ENCODE measurements at regions of chr17 and their contacts with region 1.

Region 1: DNA sequence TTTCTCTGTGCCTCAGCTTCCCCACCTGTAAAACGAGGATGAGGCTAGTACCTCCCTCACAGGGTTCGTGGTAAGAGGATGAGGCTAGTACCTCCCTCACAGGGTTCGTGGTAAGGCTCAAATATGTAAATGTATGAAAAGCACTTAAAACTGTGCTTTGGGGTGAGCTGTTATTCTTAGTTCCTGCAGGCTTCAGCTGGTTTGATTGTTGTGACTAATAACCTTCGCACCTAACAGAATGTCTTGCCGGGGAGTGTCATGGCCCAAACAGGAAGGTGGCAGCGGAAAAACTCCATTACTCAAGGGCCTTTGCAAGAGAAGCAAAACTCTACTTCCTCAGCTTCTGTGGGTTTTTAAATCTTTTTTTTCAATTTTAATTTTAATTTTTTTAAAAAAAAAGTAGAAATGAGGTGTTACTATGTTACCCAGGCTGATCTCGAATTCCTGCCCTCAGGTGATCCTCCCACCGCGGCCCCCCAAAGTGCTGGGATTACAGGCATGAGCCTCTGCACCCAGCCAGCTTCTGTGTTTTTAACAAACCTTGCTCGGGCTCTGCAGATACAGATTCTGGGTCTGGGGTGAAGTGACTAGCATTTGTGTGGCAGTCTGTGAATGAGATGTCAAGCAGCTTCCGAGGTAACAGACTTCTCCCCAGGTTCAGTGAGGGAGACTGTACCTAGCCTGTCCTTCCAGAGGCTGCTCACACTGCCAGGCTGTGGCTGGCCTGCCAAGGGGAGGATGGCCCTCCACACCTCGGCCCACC is 103.0 kb downstream of the RAB11FIP4 start:
- DNase-seq: no peak
- ATAC-seq: peak; percentile 56
- H3K4me3 Mint-ChIP-seq: peak overlapping the region; percentile 77
- H3K27ac Mint-ChIP-seq: peak overlapping the region; percentile 97
- H3K4me1 Mint-ChIP-seq: peaks cover 93% of the 10 kb centered on the region
- H3K27me3 Mint-ChIP-seq: no peaks in the 10 kb centered on the region
- CTCF ChIP-seq: no peak

Region 2: GRCh38 chr17:30824356-30825145 is 669.9 kb before region 1 on chr17 and contains the start of gene CRLF3:
- CTCF ChIA-PET with region 1: no interaction called
- POLR2A ChIA-PET with region 1: no interaction called
- intact Hi-C with region 1: loop called (anchors 5 kb)
- DNase-seq: peak; percentile 89
- ATAC-seq: peak; percentile 93
- H3K4me3 Mint-ChIP-seq: peak within 1 kb of the TSS; percentile 93
- H3K27ac Mint-ChIP-seq: peak within 1 kb of the TSS; percentile 88
- H3K4me1 Mint-ChIP-seq: peaks cover 48% of the 10 kb centered on the region
- H3K27me3 Mint-ChIP-seq: no peaks in the 10 kb centered on the region
- CTCF ChIP-seq: no peak
- total RNA-seq, gene CRLF3: 53.5 and 54.9 TPM in 2 replicates

Region 3: DNA sequence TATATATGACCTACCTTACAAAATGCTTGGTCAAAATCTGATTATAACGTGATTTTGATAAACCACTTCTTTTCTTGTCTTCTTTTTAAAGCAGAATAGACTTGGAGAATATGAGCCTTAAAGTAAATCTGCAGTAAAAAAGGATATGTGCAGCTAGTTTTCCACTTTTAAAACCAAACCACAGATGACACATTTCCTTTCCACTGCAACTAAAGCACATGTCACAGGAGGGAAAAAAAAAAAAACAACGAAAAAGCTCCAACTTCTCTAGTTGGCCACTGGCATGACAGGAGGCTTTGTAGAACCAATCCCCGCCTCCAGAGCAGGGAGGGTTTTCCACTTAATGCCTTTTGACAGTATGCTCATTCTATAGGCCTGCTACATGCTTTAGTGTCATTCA is 173.0 kb before region 1 on chr17 and contains the start of gene EVI2A:
- CTCF ChIA-PET with region 1: interaction called, 3 read pairs
- POLR2A ChIA-PET with region 1: interaction called, 6 read pairs
- intact Hi-C with region 1: loop called (anchors 2 kb)
- DNase-seq: no peak
- ATAC-seq: peak; percentile 69
- H3K4me3 Mint-ChIP-seq: peak within 1 kb of the TSS; percentile 84
- H3K27ac Mint-ChIP-seq: peak within 1 kb of the TSS; percentile 96
- H3K4me1 Mint-ChIP-seq: peaks cover 41% of the 10 kb centered on the region
- H3K27me3 Mint-ChIP-seq: no peaks in the 10 kb centered on the region
- CTCF ChIP-seq: no peak
- total RNA-seq, gene EVI2A: 46.6 and 52.5 TPM in 2 replicates

Region 4: GRCh38 chr17:31524926-31525800 is 30.7 kb after region 1 on chr17:
- CTCF ChIA-PET with region 1: interaction called, 10 read pairs
- POLR2A ChIA-PET with region 1: interaction called, 6 read pairs
- intact Hi-C with region 1: loop called (anchors 2 kb)
- DNase-seq: peak; percentile 89
- ATAC-seq: peak; percentile 78
- H3K4me3 Mint-ChIP-seq: no peak overlapping the region
- H3K27ac Mint-ChIP-seq: peak overlapping the region; percentile 24
- H3K4me1 Mint-ChIP-seq: peaks cover 9% of the 10 kb centered on the region
- H3K27me3 Mint-ChIP-seq: no peaks in the 10 kb centered on the region
- CTCF ChIP-seq: peak; percentile 88

Region 5: DNA sequence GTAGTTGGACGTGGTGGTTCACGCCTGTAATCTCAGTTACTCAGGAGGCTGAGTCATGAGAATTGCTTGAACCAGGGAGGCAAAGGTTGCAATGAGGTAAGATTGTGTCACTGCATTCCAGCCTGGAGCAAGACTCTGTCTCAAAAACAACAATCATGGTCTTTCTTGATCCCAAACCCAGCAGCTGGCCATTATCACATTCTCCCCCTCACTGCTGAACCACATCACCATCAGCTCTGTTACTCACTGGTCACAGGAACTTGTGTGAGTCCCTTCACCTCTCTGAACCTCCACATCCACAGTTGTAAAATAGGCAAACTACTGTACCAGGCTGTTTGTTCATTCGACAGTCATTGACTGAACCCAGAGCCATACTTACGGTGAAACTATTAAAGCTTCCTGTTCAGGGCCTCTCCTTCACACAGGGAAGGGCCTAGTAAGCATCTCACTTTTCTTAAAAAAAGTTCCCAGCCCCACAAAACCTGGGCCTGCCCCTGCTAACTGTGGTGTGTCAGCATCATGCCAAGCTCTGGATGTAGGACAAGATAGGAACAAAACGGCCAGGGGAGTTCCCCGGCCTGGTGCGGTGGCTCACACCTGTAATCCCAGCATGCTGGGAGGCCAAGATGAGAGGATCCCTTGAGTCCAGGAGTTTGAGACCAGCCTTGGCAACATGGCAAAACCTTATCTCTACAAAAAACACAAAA is 260.0 kb after region 1 on chr17:
- CTCF ChIA-PET with region 1: no interaction called
- POLR2A ChIA-PET with region 1: no interaction called
- intact Hi-C with region 1: no loop called
- DNase-seq: no peak
- ATAC-seq: no peak
- H3K4me3 Mint-ChIP-seq: no peak overlapping the region
- H3K27ac Mint-ChIP-seq: no peak overlapping the region
- H3K4me1 Mint-ChIP-seq: no peaks in the 10 kb centered on the region
- H3K27me3 Mint-ChIP-seq: no peaks in the 10 kb centered on the region
- CTCF ChIP-seq: no peak

Region 6: GRCh38 chr17:31888124-31888523 is 393.7 kb after region 1 on chr17:
- CTCF ChIA-PET with region 1: no interaction called
- POLR2A ChIA-PET with region 1: interaction called, 17 read pairs
- intact Hi-C with region 1: no loop called
- DNase-seq: no peak
- ATAC-seq: peak; percentile 26
- H3K4me3 Mint-ChIP-seq: peak overlapping the region; percentile 75
- H3K27ac Mint-ChIP-seq: peak overlapping the region; percentile 99
- H3K4me1 Mint-ChIP-seq: peaks cover 54% of the 10 kb centered on the region
- H3K27me3 Mint-ChIP-seq: no peaks in the 10 kb centered on the region
- CTCF ChIP-seq: no peak